ENCODE measurements at regions of chr9 and their contacts with region 1.

Region 1: DNA sequence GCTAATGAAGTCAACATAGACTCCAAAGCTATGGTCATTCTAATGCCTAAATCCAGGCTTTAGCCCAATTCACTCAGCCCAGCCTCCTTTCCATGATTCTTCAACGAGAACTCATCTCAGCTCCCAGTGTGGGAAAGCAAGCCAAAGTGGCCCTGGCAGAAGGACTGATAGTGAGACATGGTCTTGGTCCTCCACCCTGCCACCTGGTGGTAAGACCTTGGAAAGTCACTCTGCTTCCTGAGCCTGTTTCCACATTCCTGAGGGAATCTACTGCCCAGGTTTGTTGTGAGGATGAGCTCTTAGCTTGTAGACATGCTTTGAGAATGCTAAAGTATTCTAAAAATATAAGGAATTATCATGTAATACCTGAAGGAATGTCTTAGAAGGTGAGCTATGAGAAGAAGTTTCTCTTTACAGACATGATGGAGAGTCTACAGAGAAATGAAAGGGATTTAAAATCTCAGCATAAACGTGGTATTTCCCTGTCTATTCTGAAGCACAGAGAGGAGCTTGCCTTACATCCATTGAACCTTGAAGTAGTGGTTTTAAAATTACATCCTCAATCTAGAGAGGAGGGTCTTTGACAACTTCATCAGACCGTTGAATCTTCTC is 173.5 kb downstream of the TRIM32 start:
- DNase-seq: peak; percentile 45 to 72 (median 60)
- ATAC-seq: peak; percentile 86 to 97 (median 94)
- H3K4me3 ChIP-seq: no peak overlapping the region
- H3K27ac ChIP-seq: no peak overlapping the region
- H3K4me1 ChIP-seq: no peaks in the 10 kb centered on the region
- H3K27me3 ChIP-seq: no peaks in the 10 kb centered on the region
- CTCF ChIP-seq: peak; percentile 50 to 67 (median 60)

Region 2: DNA sequence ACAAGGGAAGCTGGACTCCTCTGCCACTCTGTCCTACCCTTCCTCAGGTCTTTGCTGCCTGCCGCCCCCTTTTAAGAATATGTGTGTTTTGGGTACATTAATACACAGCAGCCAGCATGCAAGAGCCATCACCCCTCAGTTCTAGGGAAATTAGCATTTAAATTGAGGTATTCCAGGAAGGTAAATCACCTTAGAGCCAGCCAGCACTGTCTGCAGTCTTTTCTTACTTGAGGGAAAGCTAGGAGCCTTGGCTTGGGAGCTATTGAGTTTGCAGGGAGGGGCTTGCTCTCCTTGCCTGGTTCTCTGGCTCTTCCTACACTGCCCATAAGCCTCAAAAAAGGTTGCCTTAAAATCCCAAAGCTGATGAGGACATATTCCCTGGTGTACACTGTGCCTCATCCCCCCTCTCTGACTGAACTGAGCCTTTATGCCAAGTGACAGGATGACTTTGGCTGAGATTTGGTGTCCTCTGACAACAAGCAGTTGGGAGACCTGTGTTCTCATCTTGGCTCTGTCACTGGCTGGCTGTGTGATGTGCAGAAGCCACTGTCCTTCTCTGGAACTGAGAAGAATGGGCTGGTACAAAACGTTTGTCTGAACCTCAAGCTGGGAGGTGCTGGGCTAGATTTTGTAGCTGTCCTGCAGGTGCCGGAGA is 119.4 kb before region 1 on chr9:
- intact Hi-C with region 1: loop called in 1 of 3 experiments (anchors 5 kb)
- DNase-seq: no peak
- ATAC-seq: no peak
- H3K4me3 ChIP-seq: no peak overlapping the region
- H3K27ac ChIP-seq: no peak overlapping the region
- H3K4me1 ChIP-seq: no peaks in the 10 kb centered on the region
- H3K27me3 ChIP-seq: no peaks in the 10 kb centered on the region
- CTCF ChIP-seq: no peak